GM13976 (cell line): ENCODE measurements at regions of chr3 and their contacts with region 1.

Region 1: GRCh38 chr3:135905058-135905724 is 60.3 kb upstream of the PPP2R3A start:
- DNase-seq: no peak
- CTCF ChIP-seq: no peak

Region 2: DNA sequence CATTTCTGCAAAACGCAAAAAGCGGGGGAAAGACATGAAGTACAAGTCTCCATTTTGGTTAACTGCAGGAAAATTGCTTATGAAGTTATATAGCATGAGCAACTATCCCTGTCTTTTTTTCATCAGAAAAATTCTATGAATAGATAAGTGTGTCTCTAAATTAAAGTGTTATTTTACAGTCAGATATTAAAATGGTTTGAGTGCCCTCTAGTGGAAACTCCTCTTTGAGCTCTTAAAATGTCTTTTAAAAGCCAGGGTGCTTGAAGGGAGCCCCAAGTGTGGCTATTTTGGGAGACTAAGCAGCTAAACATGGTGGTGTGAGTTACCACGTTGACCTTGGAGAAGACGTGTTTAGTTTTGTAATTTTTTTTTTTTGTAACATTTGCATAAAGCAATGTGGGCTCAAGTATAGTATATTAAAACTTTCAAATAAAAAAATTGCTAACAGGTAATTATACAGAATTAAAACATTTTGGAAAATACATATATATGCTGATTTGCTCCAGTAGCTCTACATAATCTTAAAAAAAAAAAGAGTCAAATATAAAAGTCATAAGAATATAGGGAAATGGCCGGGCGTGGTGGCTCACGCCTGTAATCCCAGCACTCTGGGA is 137.5 kb after region 1 on chr3:
- in situ Hi-C with region 1: loop called (anchors 10 kb)
- DNase-seq: peak; percentile 55
- CTCF ChIP-seq: peak; percentile 30

Region 3: DNA sequence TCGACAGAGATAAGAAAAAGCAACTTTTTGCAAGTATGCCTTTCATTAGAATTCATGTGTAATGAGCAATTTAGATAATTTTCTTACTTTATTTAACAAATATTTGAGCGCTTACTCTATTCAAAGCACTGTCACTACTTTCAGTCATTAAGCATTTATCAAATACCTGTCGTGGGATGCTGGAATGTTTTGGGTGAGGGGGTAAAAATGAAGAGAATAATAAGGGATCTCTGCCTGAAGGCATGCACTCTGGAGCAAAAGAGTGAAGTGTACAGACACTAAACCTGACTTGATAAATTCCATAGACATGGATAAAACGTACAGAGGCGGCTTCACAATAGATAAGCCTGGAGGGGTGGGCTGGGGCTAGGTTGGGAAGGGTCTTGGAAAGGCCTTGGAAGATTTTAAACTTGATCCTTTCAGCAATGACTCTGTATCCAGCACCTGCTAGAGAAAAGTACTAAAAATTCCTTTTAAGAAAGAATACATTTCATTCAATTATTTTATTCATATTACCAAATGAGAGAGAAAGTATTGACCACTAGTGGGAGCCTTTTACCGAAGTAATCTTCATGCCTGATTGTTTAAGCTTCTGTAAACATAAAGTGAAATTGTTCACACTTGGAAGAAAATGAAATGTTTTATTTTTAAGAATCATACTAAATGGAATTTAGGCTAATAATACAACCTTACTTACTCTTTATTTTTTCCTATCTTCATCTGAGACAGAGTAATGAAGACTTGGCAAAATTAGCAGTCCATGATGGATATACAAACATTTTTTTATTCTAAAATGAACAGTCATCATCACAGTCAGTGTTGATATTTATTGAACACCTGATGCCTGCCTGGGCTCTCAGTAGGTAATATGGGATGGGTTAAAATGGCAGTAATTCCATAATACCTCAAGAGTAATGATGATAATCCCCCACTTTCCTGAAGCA is 173.5 kb after region 1 on chr3:
- in situ Hi-C with region 1: no loop called
- DNase-seq: peak; percentile 43
- CTCF ChIP-seq: peak; percentile 35